ENCODE measurements at regions of chr11 and their contacts with region 1.

Region 1: GRCh38 chr11:32297611-32298011 is 137.7 kb downstream of the WT1 start:
- DNase-seq: peak; percentile 37 to 54 (median 53)
- H3K4me3 ChIP-seq: no peak overlapping the region
- H3K27ac ChIP-seq: no peak overlapping the region
- H3K4me1 ChIP-seq: peaks cover 0 to 8% (median 0%) of the 10 kb centered on the region in 4 experiments
- H3K27me3 ChIP-seq: no peaks in the 10 kb centered on the region

Region 2: GRCh38 chr11:31107062-31107461 is 1190.5 kb before region 1 on chr11:
- CTCF ChIA-PET with region 1: interaction called, 14 read pairs
- POLR2A ChIA-PET with region 1: no interaction called
- DNase-seq: peak; percentile 34 to 73 (median 37)
- H3K4me3 ChIP-seq: no peak overlapping the region
- H3K27ac ChIP-seq: no peak overlapping the region
- H3K4me1 ChIP-seq: no peaks in the 10 kb centered on the region
- H3K27me3 ChIP-seq: peaks cover 0 to 6% (median 0%) of the 10 kb centered on the region in 5 experiments

Region 3: GRCh38 chr11:32255841-32256240 is 41.8 kb before region 1 on chr11:
- CTCF ChIA-PET with region 1: no interaction called
- POLR2A ChIA-PET with region 1: no interaction called
- DNase-seq: no peak
- H3K4me3 ChIP-seq: no peak overlapping the region
- H3K27ac ChIP-seq: no peak overlapping the region
- H3K4me1 ChIP-seq: no peaks in the 10 kb centered on the region
- H3K27me3 ChIP-seq: peaks cover 0 to 7% (median 0%) of the 10 kb centered on the region in 5 experiments

Region 4: DNA sequence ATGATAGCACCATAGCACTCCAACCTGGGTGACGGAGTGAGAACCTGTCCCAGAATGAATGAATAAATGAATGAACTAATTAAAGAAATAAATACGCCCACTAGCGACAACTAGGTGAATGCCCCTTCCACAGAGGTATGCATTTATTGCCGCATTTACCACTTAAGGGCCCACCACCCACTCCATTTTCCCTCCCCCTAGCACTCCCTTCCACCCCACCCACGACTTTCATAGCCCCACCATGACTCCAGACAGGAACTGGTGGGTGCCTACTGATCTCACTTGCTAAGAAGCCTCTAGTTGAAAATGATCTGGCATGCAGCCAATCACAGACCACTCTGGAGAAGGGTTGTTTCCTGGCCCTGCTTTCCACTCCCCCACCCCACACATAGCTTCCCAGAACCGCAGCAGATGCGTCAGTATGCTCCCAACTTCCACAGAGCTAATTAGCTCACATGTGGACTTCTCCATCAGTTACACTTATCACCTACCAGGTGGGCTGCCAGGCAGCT is 29.9 kb before region 1 on chr11:
- CTCF ChIA-PET with region 1: no interaction called
- POLR2A ChIA-PET with region 1: no interaction called
- DNase-seq: no peak
- H3K4me3 ChIP-seq: no peak overlapping the region
- H3K27ac ChIP-seq: no peak overlapping the region
- H3K4me1 ChIP-seq: no peaks in the 10 kb centered on the region
- H3K27me3 ChIP-seq: peaks cover 0 to 2% (median 0%) of the 10 kb centered on the region in 5 experiments

Region 5: GRCh38 chr11:32400196-32400595 is 102.6 kb after region 1 on chr11:
- CTCF ChIA-PET with region 1: no interaction called
- POLR2A ChIA-PET with region 1: no interaction called
- DNase-seq: no peak
- H3K4me3 ChIP-seq: no peak overlapping the region
- H3K27ac ChIP-seq: no peak overlapping the region
- H3K4me1 ChIP-seq: peaks cover 0 to 1% (median 0%) of the 10 kb centered on the region in 4 experiments
- H3K27me3 ChIP-seq: no peaks in the 10 kb centered on the region

Measured in common myeloid progenitor, CD34-positive (primary cell).